ENCODE measurements at regions of chr1 and their contacts with region 1.

Region 1: GRCh38 chr1:157580179-157580827 is 17.6 kb downstream of the FCRL4 start:
- DNase-seq: peak; percentile 86
- H3K4me3 ChIP-seq: no peak overlapping the region
- H3K27ac ChIP-seq: no peak overlapping the region
- H3K4me1 ChIP-seq: peaks cover 44% of the 10 kb centered on the region
- CTCF ChIP-seq: peak; percentile 97

Region 2: DNA sequence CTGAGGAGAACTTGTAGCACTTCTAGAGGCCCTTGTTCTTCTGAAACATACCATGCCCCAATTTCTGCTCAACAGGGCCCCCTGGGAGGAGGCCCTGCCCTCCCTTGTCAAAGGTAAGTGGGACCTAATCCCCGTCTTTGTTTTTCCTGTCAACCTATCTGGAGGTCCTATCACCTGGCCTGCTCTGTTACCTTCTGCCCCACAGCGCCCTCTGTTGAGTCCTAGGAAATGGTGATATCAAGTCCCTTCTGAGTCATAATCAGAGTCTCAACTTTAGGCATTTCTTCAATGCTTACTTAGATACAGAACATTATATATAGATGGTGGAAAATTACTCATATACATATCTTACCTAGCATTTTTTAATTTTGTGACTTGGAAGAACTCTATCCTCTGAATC is 45.8 kb after region 1 on chr1:
- CTCF ChIA-PET with region 1: interaction called, 5 read pairs
- POLR2A ChIA-PET with region 1: interaction called, 4 read pairs
- intact Hi-C with region 1: loop called (anchors 1 kb)
- DNase-seq: peak; percentile 77
- H3K4me3 ChIP-seq: no peak overlapping the region
- H3K27ac ChIP-seq: no peak overlapping the region
- H3K4me1 ChIP-seq: peaks cover 6% of the 10 kb centered on the region
- CTCF ChIP-seq: peak; percentile 97

Region 3: GRCh38 chr1:157691285-157691920 is 111.1 kb after region 1 on chr1:
- CTCF ChIA-PET with region 1: interaction called, 15 read pairs
- POLR2A ChIA-PET with region 1: interaction called, 3 read pairs
- intact Hi-C with region 1: loop called (anchors 1 kb)
- DNase-seq: peak; percentile 67
- H3K4me3 ChIP-seq: no peak overlapping the region
- H3K27ac ChIP-seq: no peak overlapping the region
- H3K4me1 ChIP-seq: peaks cover 21% of the 10 kb centered on the region
- CTCF ChIP-seq: peak; percentile 93

Region 4: GRCh38 chr1:157849229-157849875 is 269.0 kb after region 1 on chr1:
- CTCF ChIA-PET with region 1: no interaction called
- POLR2A ChIA-PET with region 1: no interaction called
- intact Hi-C with region 1: loop called (anchors 2 kb)
- DNase-seq: peak; percentile 87
- H3K4me3 ChIP-seq: peak overlapping the region; percentile 56
- H3K27ac ChIP-seq: peak overlapping the region; percentile 90
- H3K4me1 ChIP-seq: peaks cover 63% of the 10 kb centered on the region
- CTCF ChIP-seq: no peak; the same call in 1 of the 2 replicates

Region 5: DNA sequence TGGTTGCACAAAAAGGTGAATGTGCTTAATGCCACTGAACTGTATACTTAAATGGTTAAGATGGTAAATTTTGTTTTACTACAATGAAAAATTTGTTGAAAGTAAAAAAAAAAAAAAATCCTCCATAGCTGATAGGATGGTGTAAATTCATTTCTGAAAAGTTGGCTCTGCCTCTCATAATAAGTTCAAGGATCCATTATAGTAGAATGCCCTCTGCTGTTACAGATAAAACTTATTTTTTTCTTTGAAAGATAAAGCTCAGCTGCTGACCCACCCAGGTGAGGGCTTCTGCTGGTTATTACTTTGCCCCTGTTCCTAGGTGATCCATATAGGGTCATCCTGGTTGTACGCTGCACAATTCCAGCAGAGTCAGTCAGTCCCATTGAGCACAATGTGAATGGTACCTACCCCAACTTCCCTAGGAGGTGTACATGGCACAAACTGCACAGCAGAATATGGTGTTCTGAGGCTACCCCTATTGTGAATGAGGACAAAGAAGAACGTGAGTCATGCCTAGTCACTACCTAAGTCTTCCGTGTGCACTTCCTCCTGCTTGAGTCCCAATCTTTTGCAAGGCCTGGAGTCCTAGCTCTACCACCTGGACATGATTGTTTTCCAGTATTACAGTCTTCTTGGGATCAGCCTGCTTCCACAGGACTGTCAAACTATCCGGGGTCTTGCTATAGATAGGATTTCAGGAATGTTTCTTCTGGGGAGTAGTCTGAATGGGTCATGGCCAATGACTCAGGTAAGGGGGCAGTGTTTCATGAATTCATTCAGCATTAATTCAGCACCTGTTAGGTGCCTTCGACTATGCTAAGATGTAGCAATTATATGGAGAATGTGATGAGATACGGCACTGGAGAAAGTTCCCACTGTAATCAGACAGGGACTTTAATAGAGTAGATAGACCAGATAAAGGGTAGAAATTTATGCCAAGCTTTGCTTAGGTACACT is 282.1 kb after region 1 on chr1:
- CTCF ChIA-PET with region 1: no interaction called
- POLR2A ChIA-PET with region 1: no interaction called
- intact Hi-C with region 1: loop called (anchors 5 kb)
- DNase-seq: peak; percentile 46
- H3K4me3 ChIP-seq: no peak overlapping the region
- H3K27ac ChIP-seq: no peak overlapping the region
- H3K4me1 ChIP-seq: no peaks in the 10 kb centered on the region
- CTCF ChIP-seq: peak; percentile 71

Measured in OCI-LY7 (cell line).